Heart right ventricle (tissue), 16 donors: ENCODE measurements at regions of chr5 and their contacts with region 1.

Region 1: GRCh38 chr5:58460732-58461286 is 923 bp upstream of the PLK2 start:
- DNase-seq: peak; percentile 90 to 93
- ATAC-seq: peak; percentile 82 to 93 (median 85)
- H3K4me3 ChIP-seq: peak overlapping the region; percentile 70 to 94 (median 88)
- H3K27ac ChIP-seq: peak overlapping the region; percentile 68 to 99 (median 98)
- H3K4me1 ChIP-seq: peaks cover 0 to 23% (median 12%) of the 10 kb centered on the region in 9 donors
- H3K27me3 ChIP-seq: peaks cover 0 to 20% (median 0%) of the 10 kb centered on the region in 7 donors
- CTCF ChIP-seq: peak; percentile 72 to 94 (median 82)

Region 2: GRCh38 chr5:57298295-57298984 is 1162.4 kb before region 1 on chr5:
- intact Hi-C with region 1: loop called (anchors 1 to 5 kb)
- DNase-seq: peak; percentile 41 to 91
- ATAC-seq: peak; percentile 81 to 95 (median 92)
- H3K4me3 ChIP-seq: peak overlapping the region in 6 of 10 donors; percentile 0 to 37 (median 17)
- H3K27ac ChIP-seq: peak overlapping the region in 5 of 10 donors; percentile 18 to 58 (median 23)
- H3K4me1 ChIP-seq: peaks cover 3 to 13% (median 8%) of the 10 kb centered on the region in 9 donors
- H3K27me3 ChIP-seq: no peaks in the 10 kb centered on the region
- CTCF ChIP-seq: peak; percentile 74 to 89 (median 85)

Region 3: GRCh38 chr5:57650360-57651069 is 810.3 kb before region 1 on chr5:
- intact Hi-C with region 1: loop called in 7 of 10 experiments (anchors 5 to 10 kb)
- DNase-seq: no peak
- ATAC-seq: peak in 4 of 8 donors; percentile 37 to 58 (median 52)
- H3K4me3 ChIP-seq: no peak overlapping the region
- H3K27ac ChIP-seq: no peak overlapping the region
- H3K4me1 ChIP-seq: peaks cover 0 to 13% (median 0%) of the 10 kb centered on the region in 9 donors
- H3K27me3 ChIP-seq: no peaks in the 10 kb centered on the region
- CTCF ChIP-seq: peak; percentile 30 to 66 (median 57)

Region 4: GRCh38 chr5:57887851-57888621 is 572.8 kb before region 1 on chr5:
- intact Hi-C with region 1: loop called (anchors 1 to 5 kb)
- DNase-seq: peak in 1 of 2 donors; percentile 69
- ATAC-seq: peak; percentile 89 to 93 (median 90)
- H3K4me3 ChIP-seq: no peak overlapping the region
- H3K27ac ChIP-seq: peak overlapping the region in 1 of 10 donors; percentile 8
- H3K4me1 ChIP-seq: peaks cover 0 to 32% (median 11%) of the 10 kb centered on the region in 9 donors
- H3K27me3 ChIP-seq: no peaks in the 10 kb centered on the region
- CTCF ChIP-seq: peak; percentile 42 to 82 (median 66)

Region 5: GRCh38 chr5:58042995-58043945 is 417.5 kb before region 1 on chr5:
- intact Hi-C with region 1: no loop called
- DNase-seq: no peak
- ATAC-seq: peak in 3 of 8 donors; percentile 20 to 67 (median 51)
- H3K4me3 ChIP-seq: no peak overlapping the region
- H3K27ac ChIP-seq: peak overlapping the region in 4 of 10 donors; percentile 16 to 45 (median 27)
- H3K4me1 ChIP-seq: peaks cover 0 to 42% (median 0%) of the 10 kb centered on the region in 9 donors
- H3K27me3 ChIP-seq: no peaks in the 10 kb centered on the region
- CTCF ChIP-seq: no peak

Region 6: GRCh38 chr5:58127479-58128220 is 333.2 kb before region 1 on chr5:
- intact Hi-C with region 1: loop called in 1 of 10 experiments (anchors 10 kb)
- DNase-seq: no peak
- ATAC-seq: peak in 7 of 8 donors; percentile 25 to 81 (median 61)
- H3K4me3 ChIP-seq: peak overlapping the region in 1 of 10 donors; percentile 0
- H3K27ac ChIP-seq: peak overlapping the region in 7 of 10 donors; percentile 4 to 73 (median 70)
- H3K4me1 ChIP-seq: peaks cover 0 to 31% (median 23%) of the 10 kb centered on the region in 9 donors
- H3K27me3 ChIP-seq: no peaks in the 10 kb centered on the region
- CTCF ChIP-seq: no peak

Region 7: GRCh38 chr5:58246461-58246944 is 214.3 kb before region 1 on chr5:
- intact Hi-C with region 1: loop called in 7 of 10 experiments (anchors 5 to 10 kb)
- DNase-seq: no peak
- ATAC-seq: peak in 4 of 8 donors; percentile 46 to 72 (median 57)
- H3K4me3 ChIP-seq: no peak overlapping the region
- H3K27ac ChIP-seq: peak overlapping the region in 9 of 10 donors; percentile 24 to 91 (median 57)
- H3K4me1 ChIP-seq: peaks cover 0 to 65% (median 13%) of the 10 kb centered on the region in 9 donors
- H3K27me3 ChIP-seq: no peaks in the 10 kb centered on the region
- CTCF ChIP-seq: no peak

Region 8: GRCh38 chr5:58335518-58335917 is 125.3 kb before region 1 on chr5:
- intact Hi-C with region 1: loop called in 1 of 10 experiments (anchors 10 kb)
- DNase-seq: no peak
- ATAC-seq: no peak
- H3K4me3 ChIP-seq: no peak overlapping the region
- H3K27ac ChIP-seq: no peak overlapping the region
- H3K4me1 ChIP-seq: no peaks in the 10 kb centered on the region
- H3K27me3 ChIP-seq: no peaks in the 10 kb centered on the region
- CTCF ChIP-seq: peak in 2 of 9 donors; percentile 13 to 15

Region 9: GRCh38 chr5:58640011-58640410 is 179.2 kb after region 1 on chr5:
- intact Hi-C with region 1: no loop called
- DNase-seq: no peak
- ATAC-seq: no peak
- H3K4me3 ChIP-seq: no peak overlapping the region
- H3K27ac ChIP-seq: no peak overlapping the region
- H3K4me1 ChIP-seq: no peaks in the 10 kb centered on the region
- H3K27me3 ChIP-seq: no peaks in the 10 kb centered on the region
- CTCF ChIP-seq: no peak